AG04450 (cell line): ENCODE measurements at regions of chr17 and their contacts with region 1.

Region 1: DNA sequence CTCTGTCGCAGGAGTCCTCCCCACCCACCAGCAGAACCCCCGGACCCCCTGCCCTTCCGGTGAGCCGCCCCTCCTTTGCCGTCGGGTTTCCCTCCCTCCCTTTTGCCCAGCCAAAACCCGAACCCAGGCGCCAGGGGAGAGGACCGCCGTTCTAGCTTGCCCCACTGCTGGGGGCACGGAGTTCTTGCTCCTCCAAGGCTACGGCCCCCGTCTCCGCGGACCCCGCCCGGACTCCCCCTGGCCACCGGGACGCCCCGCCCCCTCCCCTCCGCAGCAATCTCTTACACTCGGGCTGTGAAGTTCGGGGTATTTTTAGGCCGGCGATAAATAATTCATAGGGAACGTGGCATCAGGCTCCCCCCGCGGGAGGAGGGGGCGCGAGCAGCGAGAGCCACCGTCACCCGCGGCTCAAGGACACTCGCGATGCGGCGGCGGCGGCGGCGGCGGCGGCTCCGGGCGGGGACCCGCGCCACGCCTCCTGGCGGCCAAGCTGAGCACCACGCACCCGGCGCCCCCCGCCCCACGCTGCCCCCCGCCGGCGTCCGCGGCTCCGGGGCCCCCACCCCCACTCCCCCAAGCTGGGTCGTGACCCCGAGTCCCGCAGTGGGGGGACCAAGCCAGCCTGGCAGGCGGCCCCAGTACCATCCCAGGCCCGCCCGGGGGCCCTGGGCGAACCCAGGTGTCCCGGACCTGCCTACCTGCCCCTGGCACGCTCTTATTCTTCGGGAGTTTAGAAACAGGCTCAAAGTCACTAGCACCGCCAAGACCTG is at the start of gene GRIN2C:
- DNase-seq: no peak
- H3K4me3 ChIP-seq: no peak within 1 kb of the TSS
- H3K27ac ChIP-seq: no peak within 1 kb of the TSS
- H3K27me3 ChIP-seq: peaks cover 52% of the 10 kb centered on the region
- CTCF ChIP-seq: no peak
- polyA plus RNA-seq, gene GRIN2C: 0.01 TPM in 1 of 2 replicates, not detected in the other

Region 2: DNA sequence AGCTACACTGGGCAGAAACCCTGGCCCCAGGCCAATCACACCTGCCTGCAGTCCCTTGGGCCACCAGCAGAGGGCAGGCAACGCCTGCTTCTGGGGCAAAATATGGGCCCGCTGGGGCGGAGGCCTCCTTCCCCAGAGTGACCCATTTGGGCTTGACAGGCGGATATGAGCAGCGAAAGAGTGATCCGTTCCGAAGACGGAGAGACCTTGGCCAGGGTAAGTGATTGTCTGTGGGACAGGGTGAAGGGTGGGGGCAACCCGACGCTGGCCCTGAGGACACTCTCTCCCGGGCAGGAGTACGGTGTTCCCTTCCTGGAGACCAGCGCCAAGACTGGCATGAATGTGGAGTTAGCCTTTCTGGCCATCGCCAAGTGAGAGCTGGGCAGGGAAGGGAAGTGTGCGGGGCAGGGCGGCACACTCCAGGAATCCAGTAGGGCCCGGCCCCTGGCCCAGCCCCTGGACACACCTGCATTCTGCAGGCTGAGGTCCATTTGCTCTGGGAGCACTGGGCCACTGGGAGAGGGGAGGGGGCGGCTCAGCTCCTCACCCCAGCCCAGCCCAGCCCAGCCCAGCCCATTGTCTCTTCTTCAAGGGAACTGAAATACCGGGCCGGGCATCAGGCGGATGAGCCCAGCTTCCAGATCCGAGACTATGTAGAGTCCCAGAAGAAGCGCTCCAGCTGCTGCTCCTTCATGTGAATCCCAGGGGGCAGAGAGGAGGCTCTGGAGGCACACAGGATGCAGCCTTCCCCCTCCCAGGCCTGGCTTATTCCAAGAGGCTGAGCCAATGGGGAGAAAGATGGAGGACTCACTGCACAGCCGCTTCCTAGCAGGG is 114.7 kb before region 1 on chr17:
- CTCF ChIA-PET with region 1: interaction called, 84 read pairs
- POLR2A ChIA-PET with region 1: no interaction called
- DNase-seq: no peak
- H3K4me3 ChIP-seq: 0 out of 2 replicates have a peak overlapping the region, but pooled peaks have one; percentile 3
- H3K27ac ChIP-seq: no peak overlapping the region
- H3K27me3 ChIP-seq: peaks cover 7% of the 10 kb centered on the region
- CTCF ChIP-seq: peak; percentile 99

Region 3: GRCh38 chr17:74954665-74955421 is 95.2 kb after region 1 on chr17:
- CTCF ChIA-PET with region 1: no interaction called
- POLR2A ChIA-PET with region 1: no interaction called
- DNase-seq: no peak
- H3K4me3 ChIP-seq: no peak overlapping the region
- H3K27ac ChIP-seq: no peak overlapping the region
- H3K27me3 ChIP-seq: peaks cover 26% of the 10 kb centered on the region
- CTCF ChIP-seq: no peak